SK-N-SH (cell line): ENCODE measurements at regions of chr17 and their contacts with region 1.

Region 1: DNA sequence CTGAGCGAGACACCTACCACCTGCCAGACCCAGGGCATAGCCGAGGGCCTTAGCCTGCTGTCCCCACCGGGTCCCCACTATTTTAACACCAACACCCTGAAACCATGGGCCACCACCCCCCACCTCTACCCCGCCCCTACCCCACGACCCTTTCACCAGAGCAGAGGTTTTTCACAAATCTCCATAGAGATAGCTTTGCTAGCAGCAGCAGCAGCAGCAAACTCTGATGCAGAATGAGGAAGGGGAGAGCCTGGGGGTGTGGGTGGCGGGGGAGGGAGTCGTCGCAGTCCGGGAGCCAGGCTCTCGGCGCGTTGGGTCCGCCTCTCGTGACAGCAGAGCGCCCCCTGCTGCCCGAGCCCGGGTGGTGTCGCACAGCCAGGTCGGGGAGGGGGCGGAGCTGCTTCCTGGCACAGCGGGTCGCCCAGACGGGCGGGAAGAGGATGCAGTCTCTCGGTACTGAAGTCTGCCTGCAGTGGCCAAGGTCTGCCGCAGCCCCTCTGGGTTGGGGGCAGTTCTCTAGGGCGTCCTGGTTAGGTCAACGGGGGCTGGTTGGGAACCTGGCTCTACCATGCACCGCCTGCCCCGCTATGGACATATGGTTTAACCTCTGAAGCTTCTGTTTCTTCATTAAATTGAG is 38.1 kb upstream of the CCDC182 start:
- DNase-seq: peak; percentile 98
- H3K4me3 ChIP-seq: peak overlapping the region in 1 of 2 experiments; percentile 55; a peak in 2 of 4 replicates
- H3K27ac ChIP-seq: peak overlapping the region in 1 of 2 experiments; percentile 99; a peak in 2 of 4 replicates
- H3K4me1 ChIP-seq: peaks cover 0 to 40% of the 10 kb centered on the region in 2 experiments; a peak in 3 of 4 replicates
- H3K27me3 ChIP-seq: peaks cover 22% of the 10 kb centered on the region
- CTCF ChIP-seq: peak; percentile 94
- EP300 ChIP-seq: peak in 1 of 2 experiments; percentile 65; a peak in 2 of 4 replicates
- RAD21 ChIP-seq: peak; percentile 97

Region 2: DNA sequence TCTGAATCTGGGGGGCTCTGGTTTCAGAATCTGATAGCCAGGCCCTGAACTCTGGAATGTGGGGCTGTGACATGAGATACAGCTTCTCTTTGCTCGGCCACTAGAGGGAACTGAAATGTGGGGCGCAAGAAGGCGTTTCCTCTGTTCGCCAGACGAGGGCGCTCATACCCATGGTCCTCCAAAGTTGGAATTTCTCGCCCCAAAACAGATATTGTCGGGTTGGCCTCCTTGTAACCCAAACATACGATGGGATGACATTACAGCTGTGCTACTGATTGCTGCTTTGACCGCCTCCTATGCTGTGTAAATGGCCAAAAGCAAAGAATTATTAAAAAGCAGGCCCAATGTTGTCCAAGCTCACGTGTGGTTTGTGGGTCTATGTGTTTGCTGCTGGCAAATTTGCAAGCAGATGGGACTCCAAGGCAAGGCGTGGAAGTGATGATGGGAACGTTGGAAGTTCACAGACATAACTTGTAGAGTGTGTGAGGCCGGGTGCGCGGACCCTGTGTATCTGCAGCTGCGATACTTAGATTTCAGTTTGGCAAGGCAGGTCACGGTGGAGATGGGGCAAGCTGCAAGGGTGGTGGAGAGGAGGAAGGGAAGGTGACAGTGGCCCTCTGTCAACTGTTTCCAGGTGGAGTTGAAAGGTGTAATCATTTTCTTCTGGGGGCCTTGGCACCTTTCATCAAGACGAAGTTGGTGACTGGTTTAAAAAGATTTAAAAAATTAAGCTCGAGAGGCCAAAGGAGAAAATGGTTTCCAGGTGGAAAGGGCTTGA is 539.9 kb before region 1 on chr17:
- CTCF ChIA-PET with region 1: interaction called, 22 read pairs
- POLR2A ChIA-PET with region 1: no interaction called
- DNase-seq: peak; percentile 74
- H3K4me3 ChIP-seq: peak overlapping the region in 1 of 2 experiments; percentile 40; a peak in 1 of 4 replicates
- H3K27ac ChIP-seq: no peak overlapping the region; a peak in 1 of 4 replicates
- H3K4me1 ChIP-seq: peaks cover 0 to 9% of the 10 kb centered on the region in 2 experiments; a peak in 1 of 4 replicates
- H3K27me3 ChIP-seq: no peaks in the 10 kb centered on the region
- CTCF ChIP-seq: peak; percentile 100
- EP300 ChIP-seq: no peak; a peak in 1 of 4 replicates
- RAD21 ChIP-seq: peak; percentile 89

Region 3: GRCh38 chr17:57408071-57408811 is 375.0 kb before region 1 on chr17:
- CTCF ChIA-PET with region 1: no interaction called
- POLR2A ChIA-PET with region 1: no interaction called
- DNase-seq: no peak
- H3K4me3 ChIP-seq: no peak overlapping the region
- H3K27ac ChIP-seq: peak overlapping the region in 1 of 2 experiments; percentile 55; a peak in 1 of 4 replicates
- H3K4me1 ChIP-seq: peaks cover 5 to 36% of the 10 kb centered on the region in 2 experiments; a peak in 3 of 4 replicates
- H3K27me3 ChIP-seq: no peaks in the 10 kb centered on the region
- CTCF ChIP-seq: no peak
- EP300 ChIP-seq: no peak
- RAD21 ChIP-seq: no peak

Region 4: GRCh38 chr17:57561072-57561861 is 222.0 kb before region 1 on chr17:
- CTCF ChIA-PET with region 1: interaction called, 141 read pairs
- POLR2A ChIA-PET with region 1: interaction called, 9 read pairs
- DNase-seq: no peak
- H3K4me3 ChIP-seq: no peak overlapping the region
- H3K27ac ChIP-seq: peak overlapping the region in 1 of 2 experiments; percentile 99; a peak in 2 of 4 replicates
- H3K4me1 ChIP-seq: peaks cover 10 to 94% of the 10 kb centered on the region in 2 experiments; a peak in 3 of 4 replicates
- H3K27me3 ChIP-seq: no peaks in the 10 kb centered on the region
- CTCF ChIP-seq: no peak
- EP300 ChIP-seq: no peak
- RAD21 ChIP-seq: no peak

Region 5: GRCh38 chr17:57636985-57637665 is 146.1 kb before region 1 on chr17:
- CTCF ChIA-PET with region 1: interaction called, 14 read pairs
- POLR2A ChIA-PET with region 1: no interaction called
- DNase-seq: no peak
- H3K4me3 ChIP-seq: no peak overlapping the region
- H3K27ac ChIP-seq: peak overlapping the region in 1 of 2 experiments; percentile 57; a peak in 2 of 4 replicates
- H3K4me1 ChIP-seq: peaks cover 0 to 39% of the 10 kb centered on the region in 2 experiments; a peak in 1 of 4 replicates
- H3K27me3 ChIP-seq: no peaks in the 10 kb centered on the region
- CTCF ChIP-seq: no peak
- EP300 ChIP-seq: no peak
- RAD21 ChIP-seq: no peak

Region 6: DNA sequence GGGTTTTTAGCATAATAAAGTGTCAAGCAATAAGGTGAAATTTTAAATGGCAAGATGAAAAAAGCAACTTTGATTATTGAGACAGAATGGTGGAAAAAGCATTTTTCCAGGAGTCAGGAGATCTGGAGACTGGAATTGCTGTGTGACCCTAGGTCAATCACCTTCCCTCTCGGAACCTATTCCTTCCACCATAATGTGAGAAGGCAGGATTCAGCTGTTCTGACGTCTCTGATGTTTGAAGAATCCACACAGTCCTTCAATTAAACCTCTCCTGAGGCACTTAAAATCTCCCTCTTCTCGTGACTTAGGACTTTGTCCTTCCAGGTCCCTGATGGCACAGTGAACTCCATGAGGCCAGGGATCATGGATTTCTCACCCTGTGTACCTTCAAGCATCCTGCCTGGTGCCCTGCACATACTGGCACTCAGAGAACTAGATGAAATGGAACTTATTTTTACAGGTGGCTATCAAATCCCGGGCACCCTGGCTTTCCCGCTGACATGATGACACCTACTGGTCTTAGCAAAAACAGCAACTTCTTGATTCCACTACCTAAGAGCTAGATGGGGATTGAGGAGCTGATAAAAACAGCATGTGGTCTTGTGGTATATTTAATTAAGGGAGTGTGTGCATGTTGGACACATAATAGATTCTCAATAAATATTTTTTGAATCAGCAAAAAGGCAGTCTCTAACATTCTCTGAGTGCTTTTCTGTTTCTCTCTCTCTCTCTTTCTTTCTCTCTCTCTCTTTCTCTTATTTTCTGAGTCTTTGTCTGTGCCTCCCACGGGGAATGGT is 35.8 kb before region 1 on chr17:
- CTCF ChIA-PET with region 1: interaction called, 86 read pairs
- POLR2A ChIA-PET with region 1: interaction called, 30 read pairs
- DNase-seq: peak; percentile 89
- H3K4me3 ChIP-seq: no peak overlapping the region
- H3K27ac ChIP-seq: peak overlapping the region in 1 of 2 experiments; percentile 85; a peak in 2 of 4 replicates
- H3K4me1 ChIP-seq: peaks cover 0 to 40% of the 10 kb centered on the region in 2 experiments; a peak in 2 of 4 replicates
- H3K27me3 ChIP-seq: peaks cover 18% of the 10 kb centered on the region; the same call in 1 of the 2 replicates
- CTCF ChIP-seq: peak; percentile 99
- EP300 ChIP-seq: peak in 1 of 2 experiments; percentile 64; a peak in 1 of 4 replicates
- RAD21 ChIP-seq: peak; percentile 100

Region 7: DNA sequence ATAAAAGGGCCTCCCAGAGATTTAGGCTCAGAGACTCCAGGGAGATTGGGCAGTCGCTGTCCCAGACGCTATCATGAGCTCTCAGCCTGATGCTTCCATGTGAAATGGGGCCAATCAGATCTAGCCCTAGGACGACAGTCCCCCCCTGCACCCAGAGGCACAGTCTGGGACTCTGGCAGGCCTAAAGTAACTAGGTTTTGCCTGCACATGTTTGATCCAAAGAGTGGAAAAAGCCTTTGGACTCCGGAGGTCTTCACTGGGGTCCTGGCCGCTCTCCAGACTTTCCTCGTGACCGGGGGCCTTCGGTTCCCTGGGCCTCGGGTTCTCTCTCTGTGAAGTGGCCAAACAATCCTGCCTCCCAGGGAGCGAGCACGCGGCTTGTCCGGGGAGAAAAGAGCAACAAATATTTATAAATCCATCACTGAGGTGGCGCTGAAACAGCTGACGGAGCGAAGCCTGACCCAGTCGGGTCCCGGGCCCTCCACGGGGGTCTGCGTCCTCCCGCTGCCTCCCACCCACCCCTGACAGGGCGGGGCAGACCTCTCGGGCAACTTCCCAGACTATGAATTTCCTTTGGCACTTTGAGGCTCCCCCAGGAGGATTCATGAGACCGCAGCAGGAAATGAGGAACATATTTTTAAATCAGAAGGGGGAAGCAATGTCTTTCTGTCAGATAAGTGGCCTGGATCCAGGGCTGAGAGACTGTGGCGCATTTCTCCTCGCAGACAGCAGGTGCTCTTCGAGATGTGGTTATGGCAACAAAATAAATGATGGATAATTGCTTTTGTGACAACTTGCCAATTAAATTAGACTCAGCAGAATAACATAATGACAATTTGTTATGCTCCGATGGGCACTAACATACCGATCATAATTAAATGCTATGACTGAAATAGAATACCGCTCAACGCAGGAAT is 27.8 kb after region 1 on chr17:
- CTCF ChIA-PET with region 1: interaction called, 23 read pairs
- POLR2A ChIA-PET with region 1: no interaction called
- DNase-seq: peak; percentile 74
- H3K4me3 ChIP-seq: no peak overlapping the region
- H3K27ac ChIP-seq: peak overlapping the region in 1 of 2 experiments; percentile 89; a peak in 2 of 4 replicates
- H3K4me1 ChIP-seq: peaks cover 0 to 32% of the 10 kb centered on the region in 2 experiments; a peak in 2 of 4 replicates
- H3K27me3 ChIP-seq: no peaks in the 10 kb centered on the region
- CTCF ChIP-seq: no peak
- EP300 ChIP-seq: peak in 1 of 2 experiments; percentile 67; a peak in 1 of 4 replicates
- RAD21 ChIP-seq: no peak

Region 8: GRCh38 chr17:57868007-57868909 is 85.0 kb after region 1 on chr17:
- CTCF ChIA-PET with region 1: no interaction called
- POLR2A ChIA-PET with region 1: no interaction called
- DNase-seq: peak; percentile 84
- H3K4me3 ChIP-seq: no peak overlapping the region
- H3K27ac ChIP-seq: peak overlapping the region; percentile 86 to 96
- H3K4me1 ChIP-seq: peaks cover 25 to 45% of the 10 kb centered on the region in 2 experiments; a peak in 3 of 4 replicates
- H3K27me3 ChIP-seq: no peaks in the 10 kb centered on the region
- CTCF ChIP-seq: peak; percentile 70
- EP300 ChIP-seq: peak; percentile 62 to 98
- RAD21 ChIP-seq: peak; percentile 40

Region 9: GRCh38 chr17:58006924-58007780 is 223.9 kb after region 1 on chr17 and contains the start of gene SRSF1:
- CTCF ChIA-PET with region 1: no interaction called
- POLR2A ChIA-PET with region 1: no interaction called
- DNase-seq: peak; percentile 97
- H3K4me3 ChIP-seq: peak within 1 kb of the TSS; percentile 98 to 99
- H3K27ac ChIP-seq: peak within 1 kb of the TSS; percentile 98 to 99
- H3K4me1 ChIP-seq: peaks cover 33 to 34% of the 10 kb centered on the region in 2 experiments
- H3K27me3 ChIP-seq: no peaks in the 10 kb centered on the region
- CTCF ChIP-seq: no peak
- EP300 ChIP-seq: peak; percentile 10 to 27; a peak in 2 of 4 replicates
- RAD21 ChIP-seq: no peak
- polyA plus RNA-seq, gene SRSF1: 248 and 291 TPM in 2 replicates

Region 10: DNA sequence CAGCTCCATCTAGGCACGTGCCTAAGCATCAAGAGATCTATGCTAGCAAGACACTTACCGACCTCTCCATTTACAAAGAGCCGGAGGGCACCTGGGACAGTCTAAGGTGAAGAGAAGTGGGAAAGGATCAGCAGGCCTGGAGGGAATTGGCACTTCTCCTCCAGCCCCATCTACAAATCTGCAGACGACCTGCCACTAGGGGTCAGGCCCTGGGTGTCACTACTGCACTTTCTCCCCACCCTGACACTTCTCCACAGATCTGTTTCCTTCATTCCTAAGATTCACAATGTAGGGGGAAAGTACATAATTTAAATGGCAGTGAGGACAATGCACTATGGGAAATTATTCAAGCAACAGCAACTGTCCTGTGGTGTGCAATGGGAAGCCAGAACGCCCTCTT is 427.7 kb after region 1 on chr17:
- CTCF ChIA-PET with region 1: no interaction called
- POLR2A ChIA-PET with region 1: no interaction called
- DNase-seq: no peak
- H3K4me3 ChIP-seq: no peak overlapping the region
- H3K27ac ChIP-seq: no peak overlapping the region
- H3K4me1 ChIP-seq: no peaks in the 10 kb centered on the region
- H3K27me3 ChIP-seq: no peaks in the 10 kb centered on the region
- CTCF ChIP-seq: peak; percentile 42
- EP300 ChIP-seq: no peak
- RAD21 ChIP-seq: no peak